ENCODE measurements at regions of chr5 and their contacts with region 1.

Region 1: DNA sequence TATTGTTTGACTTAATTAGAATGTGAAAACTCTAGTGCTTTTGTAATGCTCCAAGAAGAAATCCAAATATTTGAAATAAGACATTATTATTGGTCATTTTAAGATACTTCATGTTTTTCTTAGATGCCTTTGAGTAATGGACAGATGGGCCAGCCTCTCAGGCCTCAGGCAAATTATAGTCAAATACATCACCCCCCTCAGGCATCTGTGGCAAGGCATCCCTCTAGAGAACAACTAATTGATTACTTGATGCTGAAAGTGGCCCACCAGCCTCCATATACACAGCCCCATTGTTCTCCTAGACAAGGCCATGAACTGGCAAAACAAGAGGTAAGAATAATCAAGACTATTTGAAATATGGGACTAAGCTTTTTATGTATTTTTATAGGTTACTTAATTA is 69.2 kb upstream of the SREK1 start:
- DNase-seq: no peak
- ATAC-seq: no peak
- H3K4me3 Mint-ChIP-seq: no peak overlapping the region
- H3K27ac Mint-ChIP-seq: no peak overlapping the region
- H3K4me1 Mint-ChIP-seq: peaks cover 9% of the 10 kb centered on the region
- H3K27me3 Mint-ChIP-seq: no peaks in the 10 kb centered on the region

Region 2: GRCh38 chr5:66057239-66057638 is 17.7 kb before region 1 on chr5:
- CTCF ChIA-PET with region 1: no interaction called
- POLR2A ChIA-PET with region 1: no interaction called
- intact Hi-C with region 1: loop called in 1 of 2 experiments (anchors 2 kb)
- DNase-seq: no peak
- ATAC-seq: no peak
- H3K4me3 Mint-ChIP-seq: no peak overlapping the region
- H3K27ac Mint-ChIP-seq: no peak overlapping the region
- H3K4me1 Mint-ChIP-seq: peaks cover 23% of the 10 kb centered on the region
- H3K27me3 Mint-ChIP-seq: no peaks in the 10 kb centered on the region

Measured in activated CD4-positive, alpha-beta T cell treated with anti-CD3 and anti-CD28 coated beads for 36 hours (primary cell).